ENCODE measurements at regions of chr2 and their contacts with region 1.

Region 1: GRCh38 chr2:102806250-102806837 is 44.5 kb downstream of the TMEM182 start:
- DNase-seq: peak; percentile 81
- ATAC-seq: peak; percentile 93
- H3K4me3 Mint-ChIP-seq: no peak overlapping the region
- H3K27ac Mint-ChIP-seq: no peak overlapping the region
- H3K4me1 Mint-ChIP-seq: no peaks in the 10 kb centered on the region
- H3K27me3 Mint-ChIP-seq: no peaks in the 10 kb centered on the region; the same call in 1 of the 2 replicates
- CTCF ChIP-seq: peak; percentile 54

Region 2: DNA sequence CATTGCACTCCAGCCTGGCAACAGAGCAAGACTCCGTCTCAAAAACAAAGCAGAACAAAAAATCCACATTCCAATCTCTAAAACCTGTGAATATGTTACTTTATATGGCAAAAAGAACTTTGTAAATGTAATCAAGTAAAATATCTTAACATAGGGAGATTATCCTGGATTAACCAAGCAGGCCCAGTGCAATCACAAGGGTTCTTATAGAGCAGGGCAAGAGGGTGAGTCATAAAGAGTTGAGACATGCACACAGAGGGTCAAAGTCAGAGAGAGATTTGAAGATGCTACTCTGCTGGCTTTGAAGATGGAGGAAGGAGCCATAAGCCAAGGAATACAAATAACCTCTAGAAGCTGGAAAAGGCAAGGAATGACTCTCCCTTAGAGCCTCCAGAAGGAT is 247.9 kb before region 1 on chr2:
- CTCF ChIA-PET with region 1: no interaction called
- POLR2A ChIA-PET with region 1: no interaction called
- DNase-seq: no peak
- ATAC-seq: no peak
- H3K4me3 Mint-ChIP-seq: no peak overlapping the region
- H3K27ac Mint-ChIP-seq: no peak overlapping the region
- H3K4me1 Mint-ChIP-seq: no peaks in the 10 kb centered on the region
- H3K27me3 Mint-ChIP-seq: no peaks in the 10 kb centered on the region
- CTCF ChIP-seq: no peak

Region 3: GRCh38 chr2:102736410-102737409 is 69.6 kb before region 1 on chr2:
- CTCF ChIA-PET with region 1: interaction called, 12 read pairs
- POLR2A ChIA-PET with region 1: no interaction called
- DNase-seq: peak; percentile 88
- ATAC-seq: peak; percentile 93
- H3K4me3 Mint-ChIP-seq: peak overlapping the region; percentile 96
- H3K27ac Mint-ChIP-seq: peak overlapping the region; percentile 32; the same call in 1 of the 2 replicates
- H3K4me1 Mint-ChIP-seq: peaks cover 19% of the 10 kb centered on the region
- H3K27me3 Mint-ChIP-seq: no peaks in the 10 kb centered on the region
- CTCF ChIP-seq: no peak

Region 4: GRCh38 chr2:102782933-102783332 is 23.4 kb before region 1 on chr2:
- CTCF ChIA-PET with region 1: interaction called, 14 read pairs
- POLR2A ChIA-PET with region 1: no interaction called
- DNase-seq: no peak
- ATAC-seq: no peak
- H3K4me3 Mint-ChIP-seq: no peak overlapping the region
- H3K27ac Mint-ChIP-seq: no peak overlapping the region; the same call in 1 of the 2 replicates
- H3K4me1 Mint-ChIP-seq: peaks cover 28% of the 10 kb centered on the region
- H3K27me3 Mint-ChIP-seq: no peaks in the 10 kb centered on the region
- CTCF ChIP-seq: no peak